A673 (cell line): ENCODE measurements at regions of chr11 and their contacts with region 1.

Region 1: DNA sequence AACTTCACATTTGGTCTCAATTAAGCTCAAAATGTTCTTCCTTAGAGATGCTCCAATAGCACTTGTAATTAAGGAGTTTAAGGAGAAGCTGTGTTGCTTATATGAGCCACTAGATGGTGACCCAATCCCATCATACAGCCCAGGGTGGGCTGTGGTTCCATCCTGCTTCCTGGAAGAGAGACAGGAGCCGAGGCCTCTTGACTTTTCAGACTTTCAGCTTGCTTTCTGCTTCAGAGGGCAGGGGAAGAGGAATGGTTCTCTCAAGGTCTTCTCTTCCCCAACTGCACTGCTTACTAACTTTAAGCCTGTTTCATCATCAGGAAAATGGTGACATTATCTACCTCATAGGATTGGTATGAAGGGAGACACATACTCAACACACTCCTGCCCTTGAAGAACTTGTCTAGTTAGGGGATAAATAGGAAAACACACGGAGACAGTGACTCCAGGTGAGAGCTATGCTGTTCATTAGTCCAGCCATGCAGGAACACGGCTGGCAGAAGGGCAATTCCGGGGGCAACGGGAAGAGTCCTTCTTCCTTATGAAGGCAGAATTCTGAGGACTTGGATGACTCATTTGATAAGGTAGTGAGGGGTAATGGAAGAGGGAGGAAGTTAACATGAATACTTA is 20.1 kb downstream of the TMEM218 start:
- DNase-seq: peak; percentile 78
- H3K4me3 ChIP-seq: no peak overlapping the region
- H3K27ac ChIP-seq: no peak overlapping the region
- H3K4me1 ChIP-seq: no peaks in the 10 kb centered on the region
- H3K27me3 ChIP-seq: no peaks in the 10 kb centered on the region
- CTCF ChIP-seq: peak; percentile 81

Region 2: DNA sequence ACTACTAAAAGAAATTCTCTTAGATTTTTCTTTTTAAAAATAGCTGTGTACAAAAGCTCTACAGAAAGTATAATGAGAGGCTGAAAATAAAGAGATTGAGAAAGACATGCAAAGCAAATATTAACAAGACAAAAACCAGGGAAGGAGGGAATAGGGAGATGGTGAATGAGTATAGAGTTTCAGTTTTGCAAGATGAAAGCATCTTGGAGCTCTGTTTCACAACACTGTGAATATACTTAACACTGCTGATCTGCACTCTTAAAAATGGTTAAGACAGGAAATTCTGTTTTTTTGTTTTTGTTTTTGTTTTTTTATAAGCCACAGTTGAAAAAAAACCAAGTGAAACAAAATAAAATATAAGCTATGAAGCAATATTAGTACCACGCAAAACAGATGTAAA is 14.6 kb after region 1 on chr11:
- CTCF ChIA-PET with region 1: no interaction called
- POLR2A ChIA-PET with region 1: interaction called, 14 read pairs
- intact Hi-C with region 1: no loop called
- DNase-seq: no peak
- H3K4me3 ChIP-seq: no peak overlapping the region
- H3K27ac ChIP-seq: no peak overlapping the region
- H3K4me1 ChIP-seq: peaks cover 5% of the 10 kb centered on the region
- H3K27me3 ChIP-seq: no peaks in the 10 kb centered on the region
- CTCF ChIP-seq: no peak

Region 3: GRCh38 chr11:125123947-125124617 is 32.7 kb after region 1 on chr11:
- CTCF ChIA-PET with region 1: interaction called, 15 read pairs
- POLR2A ChIA-PET with region 1: no interaction called
- intact Hi-C with region 1: no loop called
- DNase-seq: peak; percentile 89
- H3K4me3 ChIP-seq: no peak overlapping the region
- H3K27ac ChIP-seq: no peak overlapping the region
- H3K4me1 ChIP-seq: no peaks in the 10 kb centered on the region
- H3K27me3 ChIP-seq: no peaks in the 10 kb centered on the region
- CTCF ChIP-seq: peak; percentile 88

Region 4: GRCh38 chr11:125141686-125142535 is 50.5 kb after region 1 on chr11:
- CTCF ChIA-PET with region 1: interaction called, 34 read pairs
- POLR2A ChIA-PET with region 1: no interaction called
- intact Hi-C with region 1: loop called (anchors 1 kb)
- DNase-seq: peak; percentile 77
- H3K4me3 ChIP-seq: no peak overlapping the region
- H3K27ac ChIP-seq: no peak overlapping the region
- H3K4me1 ChIP-seq: peaks cover 7% of the 10 kb centered on the region
- H3K27me3 ChIP-seq: no peaks in the 10 kb centered on the region
- CTCF ChIP-seq: peak; percentile 99

Region 5: DNA sequence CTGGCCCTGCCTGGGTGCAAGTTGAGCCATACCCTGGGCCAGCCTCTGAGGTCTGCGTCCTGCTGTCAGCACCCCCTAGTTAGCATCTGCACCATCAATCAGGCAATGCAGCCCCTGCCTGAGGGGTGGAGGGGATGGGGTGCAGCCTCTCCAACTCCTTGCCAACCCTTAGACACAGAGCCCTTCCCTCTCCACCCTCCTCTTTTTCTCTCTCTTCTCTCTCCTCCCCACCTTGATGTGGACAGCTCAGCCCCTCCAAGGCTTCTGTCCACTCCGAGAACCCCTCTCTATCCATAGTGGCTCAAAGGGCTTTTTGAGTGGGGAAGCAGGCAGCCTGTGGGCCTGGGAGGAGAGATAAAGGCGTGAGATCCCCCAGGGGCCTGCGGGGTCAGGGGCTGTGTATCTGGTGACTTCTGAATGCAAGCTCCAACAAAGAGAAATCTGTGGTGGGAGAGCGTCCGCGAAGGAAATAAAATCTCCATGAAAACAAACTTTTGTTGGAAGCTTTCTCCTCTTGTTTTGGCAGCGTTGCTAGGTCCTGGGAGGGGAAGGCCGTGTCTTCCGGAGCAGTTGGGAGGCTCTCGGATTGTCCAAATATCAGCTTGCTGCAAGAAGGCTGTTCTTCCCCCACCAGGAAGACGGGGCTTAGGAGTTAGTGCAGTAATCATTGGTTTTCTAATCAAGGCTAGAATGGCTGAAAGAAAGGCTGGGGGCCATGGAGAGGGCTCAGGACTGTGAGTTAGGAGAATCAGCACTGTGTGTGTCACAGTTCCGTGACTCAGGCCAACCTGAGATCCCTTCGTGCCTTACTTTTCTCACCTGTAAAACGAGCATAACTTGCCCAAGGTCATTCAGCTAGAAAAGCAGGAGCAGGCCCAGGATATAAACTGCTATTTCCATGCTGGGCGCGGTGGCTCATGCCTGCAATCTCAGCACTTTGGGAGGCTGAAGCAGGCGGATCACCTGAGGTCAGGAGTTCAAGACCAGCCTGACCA is 123.5 kb after region 1 on chr11:
- CTCF ChIA-PET with region 1: no interaction called
- POLR2A ChIA-PET with region 1: no interaction called
- intact Hi-C with region 1: no loop called
- DNase-seq: no peak
- H3K4me3 ChIP-seq: no peak overlapping the region
- H3K27ac ChIP-seq: no peak overlapping the region
- H3K4me1 ChIP-seq: no peaks in the 10 kb centered on the region
- H3K27me3 ChIP-seq: peaks cover under 1% of the 10 kb centered on the region
- CTCF ChIP-seq: no peak

Region 6: DNA sequence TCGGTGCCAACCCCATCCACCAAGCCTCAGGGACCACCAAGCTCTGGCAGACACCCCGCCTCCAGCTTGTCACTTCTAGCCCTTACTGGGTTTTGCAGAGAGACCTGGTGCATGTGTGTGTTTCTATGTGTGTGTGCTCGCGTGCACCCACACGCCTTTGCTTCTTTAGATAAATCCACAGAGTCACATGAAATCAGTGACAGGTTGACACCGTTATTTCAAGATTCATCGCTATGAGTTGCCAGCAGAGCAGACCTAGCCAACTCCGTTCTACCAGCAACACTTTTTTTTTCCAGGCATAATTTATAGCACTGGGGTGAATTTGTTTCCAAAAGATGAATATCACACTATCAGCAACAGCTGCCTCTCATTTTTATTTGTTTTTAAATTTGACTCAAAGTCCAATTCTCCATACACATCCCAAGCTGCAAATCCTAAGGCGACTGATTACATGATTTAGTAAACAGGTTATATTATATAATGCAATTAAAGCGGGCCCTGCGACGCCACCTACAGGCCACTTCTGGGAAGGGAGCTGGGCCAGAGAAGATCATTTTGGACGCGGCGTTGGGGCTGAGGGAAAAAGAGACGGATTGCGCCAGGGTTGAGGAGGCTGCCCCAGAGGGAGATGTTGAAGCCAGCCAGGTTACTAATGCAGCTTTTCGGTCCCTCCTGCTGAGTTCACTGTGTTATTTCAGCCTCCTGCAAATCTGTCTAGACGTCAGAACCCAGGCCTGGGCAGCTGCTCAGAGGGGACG is 254.2 kb after region 1 on chr11:
- CTCF ChIA-PET with region 1: interaction called, 19 read pairs
- POLR2A ChIA-PET with region 1: no interaction called
- intact Hi-C with region 1: loop called (anchors 1 kb)
- DNase-seq: peak; percentile 68
- H3K4me3 ChIP-seq: no peak overlapping the region
- H3K27ac ChIP-seq: no peak overlapping the region
- H3K4me1 ChIP-seq: no peaks in the 10 kb centered on the region
- H3K27me3 ChIP-seq: no peaks in the 10 kb centered on the region
- CTCF ChIP-seq: peak; percentile 98

Region 7: DNA sequence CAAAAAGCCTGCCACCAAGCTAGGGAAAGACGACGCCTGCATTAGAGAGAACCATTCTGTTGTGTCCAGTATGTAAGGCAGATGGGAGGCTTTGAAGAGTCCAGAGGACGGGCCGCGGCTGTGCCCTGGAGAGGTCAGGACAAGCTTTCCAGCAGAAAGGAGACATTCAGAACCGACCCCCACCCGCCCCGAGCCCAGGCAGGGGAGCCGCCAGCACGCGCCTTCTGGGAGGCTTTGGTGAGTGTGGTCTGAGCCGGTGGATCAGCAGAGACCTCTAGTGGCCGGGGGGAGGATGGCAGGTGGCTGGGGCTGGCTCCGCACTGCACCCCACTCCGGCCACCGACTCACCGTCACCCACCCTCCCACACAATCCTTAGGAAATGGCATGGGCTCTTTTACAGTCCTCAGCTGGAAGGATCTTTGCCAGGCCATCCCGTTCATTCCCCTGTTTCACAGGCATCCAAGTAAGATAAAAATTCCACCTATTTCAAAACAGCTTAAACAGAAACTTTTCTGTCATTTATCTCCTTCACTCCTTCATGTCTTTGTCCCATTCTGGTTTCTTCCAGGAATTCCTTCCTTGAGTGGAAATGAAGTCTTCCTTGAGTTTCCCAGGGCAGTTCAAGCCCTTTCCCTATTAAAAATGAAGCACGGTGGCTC is 313.5 kb after region 1 on chr11:
- CTCF ChIA-PET with region 1: no interaction called
- POLR2A ChIA-PET with region 1: no interaction called
- intact Hi-C with region 1: loop called (anchors 2 kb)
- DNase-seq: peak; percentile 67
- H3K4me3 ChIP-seq: no peak overlapping the region
- H3K27ac ChIP-seq: no peak overlapping the region
- H3K4me1 ChIP-seq: no peaks in the 10 kb centered on the region
- H3K27me3 ChIP-seq: peaks cover 23% of the 10 kb centered on the region
- CTCF ChIP-seq: peak; percentile 96

Region 8: GRCh38 chr11:125874556-125875124 is 783.3 kb after region 1 on chr11:
- CTCF ChIA-PET with region 1: no interaction called
- POLR2A ChIA-PET with region 1: no interaction called
- intact Hi-C with region 1: loop called (anchors 5 kb)
- DNase-seq: peak; percentile 87
- H3K4me3 ChIP-seq: no peak overlapping the region
- H3K27ac ChIP-seq: no peak overlapping the region
- H3K4me1 ChIP-seq: no peaks in the 10 kb centered on the region
- H3K27me3 ChIP-seq: no peaks in the 10 kb centered on the region
- CTCF ChIP-seq: peak; percentile 88